Gastrocnemius medialis (tissue), 4 donors: ENCODE measurements at regions of chr10 and their contacts with region 1.

Region 1: DNA sequence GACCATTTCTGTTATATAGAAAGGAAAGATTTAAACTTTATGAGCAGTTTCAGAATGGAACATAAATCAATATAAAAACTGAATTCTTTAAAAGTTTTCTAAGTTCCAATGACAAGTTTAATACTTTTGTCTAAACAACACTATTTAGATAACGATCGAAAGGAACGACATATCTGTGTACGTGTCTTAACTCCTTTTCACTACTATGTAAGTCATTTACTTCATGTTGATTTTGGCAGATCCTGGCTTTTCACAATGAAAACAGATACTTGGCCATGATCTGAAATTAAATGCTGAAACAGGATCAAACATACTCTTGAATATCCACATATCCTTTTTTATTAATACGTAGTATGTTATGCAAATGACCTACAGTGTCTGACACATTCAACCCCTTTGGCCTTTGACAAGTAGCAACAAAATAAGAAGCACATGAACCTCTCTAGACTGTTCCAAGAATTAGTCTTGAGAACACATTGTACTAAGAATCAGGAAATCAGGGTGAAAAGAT is 41.9 kb downstream of the RNLS start:
- DNase-seq: no peak
- ATAC-seq: peak; percentile 59 to 72
- H3K4me3 ChIP-seq: no peak overlapping the region
- H3K27ac ChIP-seq: peak overlapping the region; percentile 51 to 79 (median 64)
- H3K4me1 ChIP-seq: peaks cover 0 to 16% of the 10 kb centered on the region in 2 donors
- H3K27me3 ChIP-seq: no peaks in the 10 kb centered on the region
- CTCF ChIP-seq: no peak
- POLR2A ChIP-seq: no peak

Region 2: GRCh38 chr10:88401671-88402347 is 139.4 kb before region 1 on chr10:
- in situ Hi-C with region 1: loop called in 1 of 4 experiments (anchors 10 kb)
- intact Hi-C with region 1: no loop called
- DNase-seq: no peak
- ATAC-seq: peak; percentile 50 to 62
- H3K4me3 ChIP-seq: no peak overlapping the region
- H3K27ac ChIP-seq: no peak overlapping the region
- H3K4me1 ChIP-seq: peaks cover 0 to 9% of the 10 kb centered on the region in 2 donors
- H3K27me3 ChIP-seq: no peaks in the 10 kb centered on the region
- CTCF ChIP-seq: peak in 1 of 5 experiments; percentile 10
- POLR2A ChIP-seq: no peak

Region 3: DNA sequence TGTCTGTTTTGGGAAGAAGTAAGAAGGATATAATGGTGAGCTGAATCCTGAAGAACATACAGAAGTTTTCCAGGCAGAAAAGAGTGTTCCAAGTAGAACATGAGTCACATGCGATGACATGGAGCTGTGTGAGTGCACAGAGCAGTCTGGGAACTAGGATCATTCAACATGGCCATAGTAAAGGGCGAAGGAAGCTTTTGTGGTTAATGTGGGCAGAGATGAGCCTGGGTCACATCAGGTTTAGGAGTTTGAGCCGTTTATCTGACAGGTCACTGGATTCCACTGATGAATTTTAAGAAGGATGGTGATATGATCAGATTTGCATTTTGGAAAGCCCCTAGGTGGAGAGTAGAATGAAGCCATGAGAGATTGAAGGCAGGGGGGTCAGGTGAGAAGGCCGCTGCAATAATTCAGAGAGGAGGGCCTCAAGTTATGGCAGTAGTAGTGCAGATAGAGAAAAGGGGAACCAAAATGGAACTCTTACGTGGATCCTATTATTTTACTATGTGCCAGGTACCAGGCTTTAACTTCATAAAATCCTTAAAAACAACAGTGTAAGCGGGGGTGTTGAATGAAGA is 129.3 kb before region 1 on chr10:
- in situ Hi-C with region 1: loop called in 2 of 4 experiments (anchors 10 kb)
- intact Hi-C with region 1: no loop called
- DNase-seq: no peak
- ATAC-seq: no peak
- H3K4me3 ChIP-seq: no peak overlapping the region
- H3K27ac ChIP-seq: no peak overlapping the region
- H3K4me1 ChIP-seq: peaks cover 16 to 29% of the 10 kb centered on the region in 2 donors
- H3K27me3 ChIP-seq: no peaks in the 10 kb centered on the region
- CTCF ChIP-seq: no peak
- POLR2A ChIP-seq: no peak